Activated T-helper 1 cell treated with anti-CD3 and anti-CD28 coated beads, Interleukin-12 subunit alpha, Interleukin-12 subunit beta, Interleukin-2, Interleukin-4 antibody, amounts not matched to agents 30 ng/mL and 10 ng/mL and 1 ng/mL, durations not matched to agents 14 hours and 24 hours and 36 hours (primary cell): ENCODE measurements at regions of chr14 and their contacts with region 1.

Region 1: DNA sequence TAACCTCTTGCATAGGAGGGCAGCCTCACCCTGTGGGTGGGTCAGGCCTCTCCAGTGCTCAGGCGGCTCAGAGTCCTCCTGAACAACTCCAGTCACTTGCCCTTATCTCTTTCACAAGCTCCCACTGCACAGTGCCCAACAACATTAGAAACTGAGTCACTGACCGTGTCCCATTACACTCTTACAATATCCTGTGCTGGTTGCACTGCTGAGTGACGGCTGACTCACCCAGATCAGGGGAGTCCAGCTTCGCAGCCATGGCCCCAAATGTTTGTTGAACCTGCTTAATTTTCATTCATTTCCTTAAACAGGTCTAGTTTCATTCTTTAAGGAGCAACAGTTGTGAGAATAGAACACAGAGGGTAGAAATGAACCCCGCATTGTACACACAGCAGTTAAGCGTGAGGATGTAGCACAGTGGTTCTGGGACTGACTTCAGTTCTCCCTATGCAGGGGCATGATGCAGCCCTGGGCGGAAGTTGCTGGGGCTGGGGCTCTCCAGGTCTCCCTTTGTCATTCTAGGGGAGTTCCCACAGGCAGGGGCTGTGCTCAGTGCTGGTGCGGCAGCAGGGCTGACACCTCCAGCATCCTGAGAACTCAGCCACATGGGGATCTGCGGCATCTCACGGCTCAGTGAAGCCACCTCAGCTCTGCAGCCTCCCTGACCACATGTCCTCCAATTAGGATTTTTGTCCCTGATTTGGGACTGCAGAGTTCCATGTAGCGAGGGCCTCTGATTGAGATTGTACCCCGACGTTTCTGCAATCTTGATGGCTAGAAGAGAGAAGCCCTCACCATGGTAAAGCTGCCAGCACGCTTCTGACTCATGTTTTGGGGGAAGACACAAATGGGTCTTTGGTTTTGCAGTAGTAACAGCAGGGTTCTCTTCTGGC is 16.1 kb downstream of the GPR68 start:
- DNase-seq: peak; percentile 87
- H3K4me3 Mint-ChIP-seq: peak overlapping the region; percentile 80
- H3K27ac Mint-ChIP-seq: peak overlapping the region; percentile 100
- H3K4me1 Mint-ChIP-seq: peaks cover 89% of the 10 kb centered on the region
- H3K27me3 Mint-ChIP-seq: no peaks in the 10 kb centered on the region

Region 2: DNA sequence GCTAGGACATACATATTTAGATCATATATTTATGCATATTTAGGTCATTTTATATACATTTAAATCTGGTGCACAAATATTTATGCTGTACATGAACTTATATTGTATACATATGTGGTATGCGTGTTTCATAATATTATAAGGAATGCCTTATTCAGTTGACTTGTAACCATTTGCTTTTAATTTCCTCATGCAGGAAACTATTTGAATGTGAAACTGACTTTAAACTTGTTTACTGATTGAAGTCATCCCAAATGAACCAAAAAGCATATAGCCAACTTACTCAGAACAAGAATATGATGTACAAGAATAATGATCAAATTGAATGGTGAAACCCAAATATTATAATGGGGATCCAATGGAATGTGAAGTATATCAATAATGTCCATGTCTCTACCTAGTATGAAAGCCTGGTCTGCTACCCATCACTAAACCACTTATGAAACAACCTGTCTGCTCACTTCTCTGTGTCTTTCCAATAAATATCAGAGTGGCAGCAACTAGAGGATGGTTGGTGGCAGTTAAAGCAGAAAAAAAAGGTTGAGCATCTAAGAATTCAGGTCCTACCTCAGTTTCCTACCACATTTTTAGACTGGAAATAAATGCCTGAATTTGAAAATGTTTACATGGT is 206.3 kb before region 1 on chr14:
- intact Hi-C with region 1: loop called (anchors 5 kb)
- DNase-seq: no peak
- H3K4me3 Mint-ChIP-seq: peak overlapping the region; percentile 76
- H3K27ac Mint-ChIP-seq: peak overlapping the region; percentile 94
- H3K4me1 Mint-ChIP-seq: peaks cover 83% of the 10 kb centered on the region
- H3K27me3 Mint-ChIP-seq: no peaks in the 10 kb centered on the region

Region 3: DNA sequence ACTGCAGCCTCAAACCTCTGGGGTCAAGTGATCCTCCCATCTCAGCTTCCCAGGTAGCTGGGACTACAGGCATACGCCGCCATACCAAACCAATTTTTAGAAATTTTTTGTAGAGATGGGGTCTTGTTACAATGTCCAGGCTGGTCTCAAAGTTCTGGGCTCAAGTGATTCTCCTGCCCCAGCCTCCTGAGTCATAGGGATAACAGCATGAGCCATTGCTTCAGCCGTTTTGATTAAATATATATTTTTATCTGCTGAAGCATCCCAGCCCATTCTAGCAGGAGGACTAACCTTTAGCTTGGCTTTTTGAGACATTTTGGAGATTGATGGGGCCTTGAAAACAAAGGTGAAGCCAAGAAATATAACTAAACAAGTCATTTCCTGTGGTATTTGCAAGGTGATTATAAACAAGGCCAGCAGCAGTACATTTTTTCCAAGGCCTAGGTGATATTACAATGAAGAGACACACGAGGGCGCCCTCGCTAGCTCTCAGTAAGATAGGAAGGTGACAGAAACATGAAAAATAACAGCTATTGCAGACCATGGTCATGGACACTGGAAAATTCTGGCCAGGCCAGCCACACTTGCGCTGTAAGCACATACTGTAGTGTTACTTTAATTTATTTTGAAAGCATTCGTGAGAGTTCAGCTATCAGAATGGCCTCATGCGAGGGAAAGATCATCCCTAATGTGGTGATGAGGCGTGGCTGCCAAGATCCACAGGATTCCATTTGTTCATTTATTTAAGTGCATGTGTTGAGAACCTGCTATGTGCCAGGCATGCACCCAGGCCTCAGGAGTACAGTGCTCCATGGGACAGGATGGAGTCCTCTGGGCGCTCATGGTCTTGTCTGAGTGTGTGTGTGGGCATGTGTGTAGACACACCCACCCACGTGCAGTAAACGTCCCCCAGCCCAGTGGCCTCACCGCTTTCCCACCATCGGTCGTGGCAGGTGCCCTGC is 51.0 kb before region 1 on chr14:
- intact Hi-C with region 1: loop called (anchors 1 kb)
- DNase-seq: peak; percentile 64
- H3K4me3 Mint-ChIP-seq: no peak overlapping the region
- H3K27ac Mint-ChIP-seq: peak overlapping the region; percentile 86
- H3K4me1 Mint-ChIP-seq: peaks cover 35% of the 10 kb centered on the region
- H3K27me3 Mint-ChIP-seq: no peaks in the 10 kb centered on the region

Region 4: GRCh38 chr14:91244501-91244901 is 16.1 kb after region 1 on chr14 and contains the start of gene GPR68:
- intact Hi-C with region 1: loop called (anchors 1 kb)
- DNase-seq: no peak
- H3K4me3 Mint-ChIP-seq: peak within 1 kb of the TSS; percentile 85
- H3K27ac Mint-ChIP-seq: peak within 1 kb of the TSS; percentile 88
- H3K4me1 Mint-ChIP-seq: peaks cover 89% of the 10 kb centered on the region
- H3K27me3 Mint-ChIP-seq: no peaks in the 10 kb centered on the region
- total RNA-seq, gene GPR68: 4.5 and 5.4 TPM in 2 replicates

Region 5: GRCh38 chr14:91303091-91303923 is 74.9 kb after region 1 on chr14:
- intact Hi-C with region 1: loop called (anchors 1 kb)
- DNase-seq: peak; percentile 36
- H3K4me3 Mint-ChIP-seq: peak overlapping the region; percentile 63
- H3K27ac Mint-ChIP-seq: peak overlapping the region; percentile 98
- H3K4me1 Mint-ChIP-seq: peaks cover 72% of the 10 kb centered on the region
- H3K27me3 Mint-ChIP-seq: no peaks in the 10 kb centered on the region

Region 6: GRCh38 chr14:91464615-91465205 is 236.4 kb after region 1 on chr14:
- intact Hi-C with region 1: loop called (anchors 1 kb)
- DNase-seq: no peak
- H3K4me3 Mint-ChIP-seq: no peak overlapping the region
- H3K27ac Mint-ChIP-seq: peak overlapping the region; percentile 81
- H3K4me1 Mint-ChIP-seq: peaks cover 20% of the 10 kb centered on the region
- H3K27me3 Mint-ChIP-seq: no peaks in the 10 kb centered on the region

Region 7: GRCh38 chr14:91493169-91493568 is 264.8 kb after region 1 on chr14:
- intact Hi-C with region 1: no loop called
- DNase-seq: no peak
- H3K4me3 Mint-ChIP-seq: no peak overlapping the region
- H3K27ac Mint-ChIP-seq: no peak overlapping the region
- H3K4me1 Mint-ChIP-seq: peaks cover 57% of the 10 kb centered on the region
- H3K27me3 Mint-ChIP-seq: no peaks in the 10 kb centered on the region